Endothelial cell of umbilical vein (primary cell): ENCODE measurements at regions of chr6 and their contacts with region 1.

Region 1: GRCh38 chr6:159174263-159174969 is 5.2 kb downstream of the FNDC1 start:
- DNase-seq: peak; percentile 46
- H3K4me3 ChIP-seq: no peak overlapping the region
- H3K27ac ChIP-seq: no peak overlapping the region
- H3K4me1 ChIP-seq: peaks cover 3% of the 10 kb centered on the region
- H3K27me3 ChIP-seq: peaks cover 27 to 46% of the 10 kb centered on the region in 2 experiments
- CTCF ChIP-seq: peak; percentile 86 to 95
- POLR2A ChIP-seq: no peak

Region 2: GRCh38 chr6:159184559-159184958 is 10.1 kb after region 1 on chr6:
- CTCF ChIA-PET with region 1: interaction called, 19 read pairs
- POLR2A ChIA-PET with region 1: no interaction called
- dilution Hi-C with region 1: no loop called
- intact Hi-C with region 1: no loop called
- DNase-seq: no peak
- H3K4me3 ChIP-seq: no peak overlapping the region
- H3K27ac ChIP-seq: no peak overlapping the region
- H3K4me1 ChIP-seq: no peaks in the 10 kb centered on the region
- H3K27me3 ChIP-seq: no peaks in the 10 kb centered on the region
- CTCF ChIP-seq: no peak
- POLR2A ChIP-seq: no peak

Region 3: GRCh38 chr6:159852877-159853276 is 678.5 kb after region 1 on chr6:
- CTCF ChIA-PET with region 1: interaction called, 3 read pairs
- POLR2A ChIA-PET with region 1: no interaction called
- dilution Hi-C with region 1: no loop called
- intact Hi-C with region 1: loop called (anchors 10 kb)
- DNase-seq: no peak
- H3K4me3 ChIP-seq: no peak overlapping the region
- H3K27ac ChIP-seq: no peak overlapping the region
- H3K4me1 ChIP-seq: no peaks in the 10 kb centered on the region
- H3K27me3 ChIP-seq: no peaks in the 10 kb centered on the region
- CTCF ChIP-seq: no peak
- POLR2A ChIP-seq: no peak